AG04450 (cell line): ENCODE measurements at regions of chr7 and their contacts with region 1.

Region 1: DNA sequence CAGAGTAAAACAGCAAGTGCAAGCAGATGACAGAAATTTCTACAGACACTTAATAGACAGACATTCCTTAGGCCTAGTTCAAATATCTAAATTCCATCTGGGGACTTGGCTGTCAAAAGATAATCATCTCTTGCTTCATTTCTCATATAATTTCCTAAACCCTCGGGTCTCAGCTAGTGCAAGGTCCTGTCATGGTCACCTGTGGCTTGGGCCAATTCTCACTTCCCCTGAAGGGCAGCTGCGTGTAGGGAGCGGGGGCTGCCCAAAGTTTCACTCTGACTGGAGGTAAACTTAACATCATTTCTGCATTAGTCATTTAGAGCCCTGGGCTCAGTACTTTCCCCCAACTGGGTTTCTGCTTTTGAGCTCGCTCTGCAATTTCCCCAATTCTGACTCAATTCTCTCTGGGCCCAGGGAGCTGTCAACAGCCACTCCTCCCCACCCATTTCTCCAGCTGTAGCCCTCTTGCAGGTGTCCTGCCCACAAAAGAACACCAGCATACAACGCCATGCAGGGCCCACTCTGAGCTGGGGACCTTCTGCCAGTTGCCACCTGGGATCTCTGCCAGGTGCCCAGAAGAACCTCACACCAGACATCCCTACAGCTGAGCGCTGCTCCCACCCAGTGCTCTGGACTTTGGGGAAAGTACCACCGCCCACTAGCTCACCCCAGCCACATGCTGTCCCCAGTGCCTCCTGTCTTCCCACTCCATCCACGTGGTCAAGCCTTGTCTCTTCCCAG is 38.0 kb downstream of the VOPP1 start:
- DNase-seq: no peak
- H3K4me3 ChIP-seq: no peak overlapping the region
- H3K27ac ChIP-seq: peak overlapping the region; percentile 75
- H3K27me3 ChIP-seq: no peaks in the 10 kb centered on the region
- CTCF ChIP-seq: no peak

Region 2: GRCh38 chr7:55488216-55488615 is 46.1 kb before region 1 on chr7:
- CTCF ChIA-PET with region 1: no interaction called
- POLR2A ChIA-PET with region 1: no interaction called
- DNase-seq: no peak
- H3K4me3 ChIP-seq: no peak overlapping the region
- H3K27ac ChIP-seq: no peak overlapping the region
- H3K27me3 ChIP-seq: no peaks in the 10 kb centered on the region
- CTCF ChIP-seq: no peak

Region 3: DNA sequence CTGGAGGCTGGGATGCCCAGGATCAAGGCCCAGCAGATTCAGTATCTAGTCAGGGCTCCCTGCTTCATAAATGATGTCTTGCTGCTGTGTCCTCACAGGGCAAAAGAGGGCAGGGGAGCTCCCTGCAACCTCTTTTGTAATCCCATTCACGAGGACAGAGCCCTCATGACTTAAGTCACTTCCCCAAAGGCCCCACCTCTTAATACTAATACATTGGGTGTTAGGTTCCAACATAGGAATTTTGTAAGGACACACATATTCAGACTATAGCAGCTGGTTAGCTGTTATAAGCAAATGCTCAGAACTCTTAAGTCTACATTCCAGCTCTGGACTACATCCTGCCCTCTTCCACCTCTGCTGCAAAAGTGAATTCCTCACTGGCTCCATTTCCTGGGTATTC is 25.0 kb before region 1 on chr7:
- CTCF ChIA-PET with region 1: no interaction called
- POLR2A ChIA-PET with region 1: interaction called, 10 read pairs
- DNase-seq: peak; percentile 67
- H3K4me3 ChIP-seq: no peak overlapping the region
- H3K27ac ChIP-seq: peak overlapping the region; percentile 81
- H3K27me3 ChIP-seq: no peaks in the 10 kb centered on the region
- CTCF ChIP-seq: no peak

Region 4: DNA sequence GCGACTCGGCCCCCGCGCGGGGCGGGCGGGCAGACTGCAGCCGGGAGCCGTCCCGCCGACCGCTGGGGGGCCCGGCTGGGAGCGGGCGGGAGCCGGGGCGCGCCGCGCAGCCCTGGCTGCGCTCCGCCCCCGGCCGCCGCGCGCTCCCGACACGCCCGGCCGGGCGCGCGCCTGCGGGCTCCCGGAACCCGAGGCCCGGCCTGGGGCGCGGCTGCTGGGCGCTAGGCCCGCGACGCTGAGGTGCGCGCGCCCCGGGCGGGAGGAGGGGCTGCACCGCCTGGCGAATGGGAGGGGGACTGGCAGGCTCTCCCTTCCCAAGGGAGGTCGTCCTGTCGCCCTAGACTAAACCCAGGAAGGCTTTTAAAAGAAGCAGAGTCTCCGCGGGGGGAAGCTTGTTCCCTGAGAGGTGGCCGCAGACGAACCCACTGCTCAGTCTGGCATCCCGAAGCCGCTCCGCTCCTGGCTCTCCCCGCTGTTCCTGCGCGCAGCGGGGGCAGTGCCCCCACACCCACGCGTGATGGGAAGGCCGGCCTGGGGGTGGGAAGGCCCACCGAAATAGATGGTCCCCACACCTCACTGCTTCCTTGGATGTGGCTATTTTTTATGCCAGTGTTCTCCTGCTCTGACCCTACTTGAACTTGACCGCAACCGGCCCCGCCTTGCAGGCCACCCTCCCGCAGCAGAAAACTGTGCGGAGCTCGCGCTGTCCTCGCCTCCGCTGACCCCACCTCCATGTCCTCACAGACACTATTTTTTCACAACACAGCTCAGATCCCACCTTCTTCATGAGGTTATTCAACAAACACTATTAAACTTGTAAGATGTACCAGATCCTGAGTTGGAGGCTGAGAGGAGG is 38.3 kb after region 1 on chr7 and contains the start of gene VOPP1:
- CTCF ChIA-PET with region 1: no interaction called
- POLR2A ChIA-PET with region 1: interaction called, 17 read pairs
- DNase-seq: no peak
- H3K4me3 ChIP-seq: peak within 1 kb of the TSS; percentile 82
- H3K27ac ChIP-seq: peak within 1 kb of the TSS; percentile 90
- H3K27me3 ChIP-seq: no peaks in the 10 kb centered on the region
- CTCF ChIP-seq: no peak
- polyA plus RNA-seq, gene VOPP1: 85.9 and 88.4 TPM in 2 replicates

Region 5: GRCh38 chr7:56188823-56189346 is 654.5 kb after region 1 on chr7:
- CTCF ChIA-PET with region 1: no interaction called
- POLR2A ChIA-PET with region 1: no interaction called
- DNase-seq: no peak
- H3K4me3 ChIP-seq: no peak overlapping the region
- H3K27ac ChIP-seq: no peak overlapping the region
- H3K27me3 ChIP-seq: no peaks in the 10 kb centered on the region
- CTCF ChIP-seq: no peak